ENCODE measurements at regions of chr3 and their contacts with region 1.

Region 1: DNA sequence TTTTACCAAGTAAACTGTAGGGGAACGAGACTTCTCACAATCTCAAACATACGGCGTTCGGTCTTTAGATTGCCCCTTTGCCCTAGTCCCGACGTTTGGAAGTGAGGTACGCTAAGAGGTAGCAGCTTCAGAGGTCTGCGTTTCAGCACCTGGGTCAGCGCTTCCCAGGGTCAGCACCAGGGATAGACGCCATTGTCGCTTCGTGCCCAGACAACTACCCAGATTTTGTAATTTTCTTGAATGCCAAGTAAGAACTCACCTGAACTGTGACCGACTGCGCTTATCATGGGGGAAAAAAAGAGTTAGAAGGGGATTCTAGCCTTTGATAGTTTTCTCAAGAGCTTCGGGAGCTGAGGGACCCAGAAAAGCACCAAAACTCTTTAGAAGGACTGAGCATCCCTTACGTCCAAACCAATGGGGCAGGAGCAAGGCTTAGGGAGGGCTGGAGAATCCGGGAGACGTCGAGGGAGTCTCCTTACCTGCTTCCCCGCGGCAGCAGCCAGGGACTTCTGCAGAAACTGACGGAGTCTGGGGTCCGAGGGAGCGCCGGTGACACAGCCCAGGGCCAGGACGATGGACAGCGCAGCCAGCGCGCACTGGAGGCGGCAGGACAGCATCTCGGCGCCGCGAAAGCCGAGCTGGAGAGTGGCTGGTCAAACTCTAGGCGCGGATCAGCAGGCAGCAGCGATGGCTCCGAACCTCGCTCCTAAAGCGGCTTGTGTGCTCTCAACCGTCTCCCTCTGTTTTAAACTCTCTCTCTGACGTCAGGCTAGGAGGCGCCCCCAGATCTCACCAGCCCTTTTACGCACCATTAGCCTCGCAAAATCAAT is at the start of gene SST:
- DNase-seq: peak; percentile 21 to 66 (median 42)
- ATAC-seq: peak; percentile 50 to 92 (median 85)
- H3K4me3 ChIP-seq: no peak within 1 kb of the TSS
- H3K27ac ChIP-seq: no peak within 1 kb of the TSS
- H3K4me1 ChIP-seq: no peaks in the 10 kb centered on the region
- H3K27me3 ChIP-seq: peaks cover 0 to 7% (median 3%) of the 10 kb centered on the region in 4 donors
- CTCF ChIP-seq: no peak
- total RNA-seq, gene SST: 91.5 to 743 (median 193) TPM

Region 2: GRCh38 chr3:187227658-187228258 is 442.1 kb before region 1 on chr3:
- intact Hi-C with region 1: loop called in 2 of 3 experiments (anchors 5 kb)
- DNase-seq: no peak
- ATAC-seq: no peak
- H3K4me3 ChIP-seq: no peak overlapping the region
- H3K27ac ChIP-seq: no peak overlapping the region
- H3K4me1 ChIP-seq: no peaks in the 10 kb centered on the region
- H3K27me3 ChIP-seq: no peaks in the 10 kb centered on the region
- CTCF ChIP-seq: no peak

Region 3: DNA sequence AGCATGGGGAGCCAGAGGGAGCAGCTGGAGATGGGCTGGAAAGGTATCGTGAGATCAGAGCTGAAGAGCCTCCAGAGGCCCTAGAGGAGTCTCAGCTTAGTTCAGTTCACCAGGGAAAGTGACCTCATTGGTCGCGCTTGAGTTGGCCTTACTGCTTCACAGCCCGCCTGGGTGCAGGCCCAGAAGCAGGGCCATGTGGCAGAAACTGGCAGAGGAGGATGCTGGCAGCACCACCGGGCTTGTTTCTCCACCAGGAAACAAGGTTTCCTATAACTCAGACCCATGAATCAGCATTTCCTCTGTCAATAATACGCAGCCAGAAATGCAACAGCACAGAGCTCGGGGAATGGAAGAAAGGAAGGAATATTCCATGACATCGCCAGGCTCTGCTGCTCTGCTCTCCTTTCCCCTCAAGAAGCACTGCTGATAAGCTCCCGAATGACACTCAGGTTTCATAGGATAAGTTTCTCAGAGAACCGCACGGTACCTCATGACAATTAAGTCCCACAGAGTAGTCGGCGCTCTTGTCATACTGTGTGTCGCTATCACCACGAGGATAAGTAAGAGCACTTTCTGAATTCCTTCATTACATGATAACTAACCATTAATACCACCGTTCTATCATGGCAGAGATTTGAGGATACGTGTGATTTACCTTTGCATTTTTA is 337.0 kb after region 1 on chr3:
- intact Hi-C with region 1: no loop called
- DNase-seq: peak in 1 of 6 donors; percentile 43
- ATAC-seq: peak in 1 of 4 donors; percentile 9
- H3K4me3 ChIP-seq: no peak overlapping the region
- H3K27ac ChIP-seq: no peak overlapping the region
- H3K4me1 ChIP-seq: peaks cover 11 to 17% (median 15%) of the 10 kb centered on the region in 3 donors
- H3K27me3 ChIP-seq: no peaks in the 10 kb centered on the region
- CTCF ChIP-seq: no peak

Measured in pancreas (tissue), 10 donors.